ENCODE measurements at regions of chr2 and their contacts with region 1.

Region 1: DNA sequence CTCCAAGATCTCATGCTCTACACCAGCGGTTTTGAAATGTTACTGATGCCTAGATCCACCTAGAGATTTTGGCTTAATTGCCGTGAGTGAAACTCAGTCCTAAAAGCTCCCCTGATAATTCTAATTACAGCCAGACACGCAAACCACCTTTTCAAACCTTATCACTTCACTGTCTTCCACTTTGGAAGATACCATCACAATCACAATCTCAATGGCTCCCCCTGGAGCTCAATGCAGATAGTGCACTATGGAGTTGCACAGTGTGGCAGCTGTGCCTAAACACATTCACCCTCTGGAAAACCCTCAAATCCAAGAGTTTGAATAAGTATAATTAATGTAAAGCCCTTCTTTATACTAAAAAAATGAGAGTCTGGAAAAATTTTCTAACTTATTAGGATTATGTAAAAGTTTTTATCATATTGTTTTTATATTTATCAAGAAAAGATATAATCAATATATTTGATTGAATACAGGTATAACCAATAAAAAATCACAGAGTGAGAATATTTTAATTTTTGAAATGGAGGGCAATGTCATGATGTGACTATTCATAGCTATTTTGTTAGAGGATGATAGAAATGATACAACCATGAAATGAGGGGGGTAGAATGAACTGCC is 102.9 kb upstream of the SLC8A1 start:
- H3K4me3 ChIP-seq: no peak overlapping the region
- H3K27ac ChIP-seq: no peak overlapping the region
- H3K4me1 ChIP-seq: no peaks in the 10 kb centered on the region
- CTCF ChIP-seq: no peak

Region 2: GRCh38 chr2:39913648-39914461 is 640.9 kb before region 1 on chr2:
- CTCF ChIA-PET with region 1: interaction called, 65 read pairs
- POLR2A ChIA-PET with region 1: interaction called, 4 read pairs
- H3K4me3 ChIP-seq: no peak overlapping the region
- H3K27ac ChIP-seq: no peak overlapping the region
- H3K4me1 ChIP-seq: no peaks in the 10 kb centered on the region
- CTCF ChIP-seq: no peak

Region 3: DNA sequence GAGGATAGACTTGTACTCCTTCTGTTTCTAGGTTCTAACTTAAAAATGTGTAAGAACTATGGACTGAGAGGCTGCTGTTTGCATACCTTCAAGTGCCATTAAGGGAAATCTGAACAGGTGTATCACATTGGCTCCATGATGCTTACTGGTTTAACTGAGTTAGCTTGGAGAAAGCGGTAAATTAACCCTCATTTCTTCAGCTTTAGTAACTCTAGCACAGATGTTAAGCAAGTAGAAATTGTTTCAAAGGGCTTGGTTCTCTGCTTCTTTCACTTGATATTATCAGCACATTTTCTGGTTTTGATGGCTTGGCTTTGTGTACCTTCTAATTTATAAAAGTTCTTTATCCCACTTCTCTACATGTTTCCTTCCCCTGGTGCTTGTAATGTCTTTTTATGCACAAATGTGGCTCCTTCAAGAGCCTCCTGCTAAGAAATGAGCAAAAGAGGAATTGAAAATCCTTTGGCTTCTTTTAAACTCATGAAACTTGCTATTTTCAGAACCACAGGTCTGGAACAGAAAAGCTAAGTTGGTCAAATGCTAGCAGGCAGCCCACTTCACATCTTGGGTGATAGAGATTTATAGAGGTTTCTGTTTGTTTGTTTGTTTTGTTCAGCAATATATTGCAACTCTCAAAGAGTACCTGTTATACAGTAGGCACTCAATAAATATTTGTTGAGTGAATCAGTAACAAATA is 525.8 kb before region 1 on chr2:
- CTCF ChIA-PET with region 1: no interaction called
- POLR2A ChIA-PET with region 1: no interaction called
- H3K4me3 ChIP-seq: no peak overlapping the region
- H3K27ac ChIP-seq: no peak overlapping the region
- H3K4me1 ChIP-seq: no peaks in the 10 kb centered on the region
- CTCF ChIP-seq: no peak

Region 4: GRCh38 chr2:40543381-40543780 is 11.4 kb before region 1 on chr2:
- CTCF ChIA-PET with region 1: interaction called, 10 read pairs
- POLR2A ChIA-PET with region 1: no interaction called
- H3K4me3 ChIP-seq: no peak overlapping the region
- H3K27ac ChIP-seq: no peak overlapping the region
- H3K4me1 ChIP-seq: no peaks in the 10 kb centered on the region
- CTCF ChIP-seq: no peak

Measured in HEK293 (cell line).